Panc1 (cell line): ENCODE measurements at regions of chr7 and their contacts with region 1.

Region 1: DNA sequence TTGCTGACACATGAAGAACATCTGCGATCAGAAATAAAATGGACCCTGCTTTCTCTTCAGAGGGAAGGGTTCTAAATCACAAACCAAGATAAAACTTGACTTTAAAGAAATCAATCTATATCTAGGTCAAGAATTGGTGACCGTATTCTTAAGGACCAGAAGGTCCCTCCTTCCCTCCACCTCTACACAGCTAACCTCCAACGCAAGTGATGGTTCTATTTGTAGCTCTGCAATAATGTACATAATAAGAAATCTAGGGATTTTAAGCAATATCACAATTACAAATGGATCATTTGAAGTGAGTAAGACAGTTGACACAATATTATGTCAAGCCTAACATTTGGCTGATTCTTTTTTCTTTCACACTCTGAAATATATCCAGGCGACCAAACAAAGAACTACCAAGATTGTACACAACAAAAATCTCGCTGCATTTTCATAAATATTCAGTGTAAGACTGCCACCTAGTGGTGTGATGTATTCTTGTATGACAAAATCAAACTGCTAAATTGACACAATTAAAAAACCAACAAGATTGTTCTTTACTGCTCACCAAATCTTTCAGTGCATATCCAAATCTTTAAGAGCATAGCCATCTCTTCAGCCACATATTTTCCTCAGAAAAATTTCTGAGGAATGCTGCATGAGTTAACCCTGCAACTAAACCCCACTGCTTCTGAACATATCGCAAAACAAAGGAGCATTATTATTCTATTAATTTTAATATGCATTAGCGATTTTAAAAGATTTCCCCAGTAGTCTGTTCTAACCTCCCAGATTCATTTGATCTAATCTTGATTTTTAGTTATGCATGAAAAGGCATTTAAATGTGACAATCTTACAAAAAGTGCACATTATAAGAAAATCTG is 44.5 kb downstream of the ICA1 start:
- DNase-seq: peak; percentile 57
- ATAC-seq: 0 out of 2 replicates have a peak, but pooled peaks have one; percentile 53
- H3K4me3 ChIP-seq: no peak overlapping the region
- H3K27ac ChIP-seq: no peak overlapping the region
- H3K4me1 ChIP-seq: no peaks in the 10 kb centered on the region
- H3K27me3 ChIP-seq: no peaks in the 10 kb centered on the region
- CTCF ChIP-seq: peak; percentile 69; the same call in 1 of the 2 replicates

Region 2: DNA sequence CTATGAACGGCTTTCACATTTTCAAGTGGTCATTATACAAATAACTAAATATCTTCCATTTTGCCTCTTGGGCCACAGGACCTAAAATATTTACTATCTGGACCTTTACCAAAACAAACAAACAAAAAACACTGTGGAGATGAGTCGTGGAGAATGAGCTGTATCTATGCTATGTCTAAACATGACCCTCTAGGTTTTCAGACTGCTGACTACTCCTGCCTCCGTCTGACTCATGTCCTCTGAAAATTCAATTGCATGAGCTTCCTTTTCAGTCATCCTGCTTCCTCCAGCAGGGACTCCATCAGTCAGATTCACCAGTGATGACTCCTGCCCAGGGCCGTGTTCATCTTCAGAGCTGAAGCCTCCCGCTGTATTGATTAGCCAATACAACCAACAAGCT is 778.6 kb before region 1 on chr7:
- CTCF ChIA-PET with region 1: no interaction called
- POLR2A ChIA-PET with region 1: no interaction called
- in situ Hi-C with region 1: no loop called
- intact Hi-C with region 1: loop called (anchors 5 kb)
- DNase-seq: peak; percentile 95
- ATAC-seq: peak; percentile 89
- H3K4me3 ChIP-seq: no peak overlapping the region
- H3K27ac ChIP-seq: no peak overlapping the region
- H3K4me1 ChIP-seq: no peaks in the 10 kb centered on the region
- H3K27me3 ChIP-seq: no peaks in the 10 kb centered on the region
- CTCF ChIP-seq: no peak

Region 3: DNA sequence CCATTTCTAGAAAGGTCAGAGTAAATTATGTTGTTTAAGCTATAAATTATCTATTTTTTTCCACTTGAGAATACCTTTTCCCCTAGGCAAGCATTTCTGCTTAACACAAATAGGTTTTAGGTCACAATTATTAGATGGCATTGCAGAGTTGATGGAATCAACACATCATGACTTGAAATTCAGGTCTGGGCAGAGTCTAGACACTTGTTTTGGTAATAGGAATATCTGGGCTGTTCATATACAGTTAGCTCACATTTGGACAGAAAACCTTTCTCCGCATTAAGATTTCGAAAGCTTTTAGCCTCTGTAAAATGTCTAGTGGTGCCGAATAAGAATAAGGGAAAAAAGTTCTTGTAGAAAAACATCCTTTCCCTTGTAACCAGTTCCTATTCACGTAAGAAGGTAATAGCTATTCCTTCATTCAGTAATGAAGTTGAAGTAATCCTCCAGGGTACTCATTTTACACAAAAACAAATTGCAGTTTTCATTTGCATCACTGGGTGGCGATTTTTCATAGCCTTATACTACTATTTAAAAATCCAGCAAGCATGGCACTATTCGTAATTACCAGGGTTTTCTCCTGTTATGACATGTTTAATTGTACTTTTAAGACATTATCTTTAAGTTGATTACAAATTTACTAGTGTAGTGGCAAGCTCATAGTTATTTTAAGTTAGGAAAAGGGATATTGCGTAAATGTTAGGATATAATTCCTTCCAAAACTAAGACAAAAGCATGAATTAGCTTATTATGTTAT is 536.1 kb before region 1 on chr7:
- CTCF ChIA-PET with region 1: interaction called, 4 read pairs
- POLR2A ChIA-PET with region 1: no interaction called
- in situ Hi-C with region 1: no loop called
- intact Hi-C with region 1: loop called (anchors 5 kb)
- DNase-seq: peak; percentile 85
- ATAC-seq: peak; percentile 95
- H3K4me3 ChIP-seq: no peak overlapping the region
- H3K27ac ChIP-seq: peak overlapping the region; percentile 39; the same call in 1 of the 2 replicates
- H3K4me1 ChIP-seq: peaks cover 14% of the 10 kb centered on the region
- H3K27me3 ChIP-seq: no peaks in the 10 kb centered on the region
- CTCF ChIP-seq: peak; percentile 75; the same call in 1 of the 2 replicates

Region 4: DNA sequence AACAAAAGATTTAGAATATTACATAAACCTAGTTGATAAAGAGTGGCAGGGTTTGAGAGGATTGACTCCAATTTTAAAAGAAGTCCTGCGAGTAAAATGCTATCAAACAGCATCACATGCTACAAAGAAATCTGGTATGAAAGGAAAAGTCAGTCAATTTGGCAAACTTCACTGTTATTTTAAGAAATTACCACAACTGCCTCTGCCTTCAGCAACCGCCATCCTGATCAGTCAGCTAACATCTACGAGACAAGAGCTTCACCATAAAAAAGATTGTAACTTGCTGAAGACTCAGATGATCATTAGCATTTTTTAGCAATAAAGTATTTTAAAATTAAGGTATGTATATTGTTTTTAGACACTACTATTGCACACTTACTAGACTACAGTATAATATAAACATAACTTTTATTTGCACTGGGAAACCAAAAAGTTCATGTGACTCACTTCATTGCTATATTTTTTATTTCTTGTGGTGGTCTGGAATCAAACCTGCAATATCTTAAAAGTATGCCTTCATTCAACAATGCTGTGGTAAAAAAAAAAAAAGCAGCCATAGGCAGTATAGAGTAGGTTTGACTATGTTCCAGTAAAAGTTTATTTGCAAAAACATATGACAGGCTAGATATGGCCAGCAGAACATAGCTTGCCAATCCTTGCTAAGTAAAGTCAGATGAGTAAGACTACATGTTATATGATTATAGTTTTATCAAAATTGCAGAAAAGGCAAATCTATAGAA is 174.5 kb before region 1 on chr7:
- CTCF ChIA-PET with region 1: no interaction called
- POLR2A ChIA-PET with region 1: no interaction called
- in situ Hi-C with region 1: no loop called
- intact Hi-C with region 1: loop called (anchors 10 kb)
- DNase-seq: no peak
- ATAC-seq: no peak
- H3K4me3 ChIP-seq: no peak overlapping the region
- H3K27ac ChIP-seq: no peak overlapping the region
- H3K4me1 ChIP-seq: no peaks in the 10 kb centered on the region
- H3K27me3 ChIP-seq: no peaks in the 10 kb centered on the region
- CTCF ChIP-seq: no peak

Region 5: DNA sequence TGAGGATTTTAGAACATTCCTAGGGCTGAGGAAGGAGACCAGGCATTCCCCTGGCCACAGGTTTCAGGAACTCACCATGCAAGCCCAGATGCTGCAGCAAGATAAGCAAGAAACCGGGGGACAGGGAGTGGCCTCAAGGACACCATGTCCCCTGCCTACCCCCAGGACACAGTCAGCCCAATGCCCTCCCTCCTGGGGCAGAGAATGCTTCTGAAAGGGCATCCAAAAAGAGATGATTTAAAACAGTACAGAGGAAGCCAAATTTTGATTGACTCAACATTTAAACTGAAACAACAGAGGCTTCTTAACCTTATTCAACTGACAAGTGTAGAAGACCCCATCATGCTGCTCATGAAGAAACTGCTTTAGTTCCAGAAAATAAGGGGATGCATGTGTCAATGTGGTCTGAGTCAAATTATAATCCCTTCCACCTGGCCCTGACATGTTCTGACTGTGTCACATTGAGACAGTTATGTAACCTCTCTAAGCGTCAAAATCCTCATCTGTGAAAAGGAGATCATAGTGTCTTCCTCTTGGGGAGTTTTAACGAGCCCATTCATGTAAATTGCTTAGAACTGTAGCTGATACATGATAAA is 15.5 kb before region 1 on chr7:
- CTCF ChIA-PET with region 1: no interaction called
- POLR2A ChIA-PET with region 1: no interaction called
- in situ Hi-C with region 1: no loop called
- intact Hi-C with region 1: no loop called
- DNase-seq: no peak
- ATAC-seq: no peak
- H3K4me3 ChIP-seq: no peak overlapping the region
- H3K27ac ChIP-seq: no peak overlapping the region
- H3K4me1 ChIP-seq: no peaks in the 10 kb centered on the region
- H3K27me3 ChIP-seq: peaks cover 25% of the 10 kb centered on the region
- CTCF ChIP-seq: no peak

Region 6: GRCh38 chr7:8785077-8785476 is 567.6 kb after region 1 on chr7:
- CTCF ChIA-PET with region 1: no interaction called
- POLR2A ChIA-PET with region 1: no interaction called
- in situ Hi-C with region 1: no loop called
- intact Hi-C with region 1: no loop called
- DNase-seq: no peak
- ATAC-seq: no peak
- H3K4me3 ChIP-seq: no peak overlapping the region
- H3K27ac ChIP-seq: no peak overlapping the region
- H3K4me1 ChIP-seq: no peaks in the 10 kb centered on the region
- H3K27me3 ChIP-seq: no peaks in the 10 kb centered on the region
- CTCF ChIP-seq: no peak